ENCODE measurements at regions of chr2 and their contacts with region 1.

Region 1: GRCh38 chr2:240434728-240435456 is 571 bp upstream of the GPC1 start:
- DNase-seq: peak; percentile 70 to 91 (median 81)
- ATAC-seq: peak; percentile 89
- H3K4me3 ChIP-seq: peak overlapping the region; percentile 48
- H3K4me3 Mint-ChIP-seq: peak overlapping the region; percentile 81 to 89 (median 86)
- H3K27ac ChIP-seq: no peak overlapping the region
- H3K27ac Mint-ChIP-seq: peak overlapping the region in 6 of 9 donors; percentile 14 to 77 (median 57)
- H3K4me1 ChIP-seq: peaks cover 0 to 6% of the 10 kb centered on the region in 2 donors
- H3K4me1 Mint-ChIP-seq: peaks cover 0 to 11% (median 4%) of the 10 kb centered on the region in 7 donors
- H3K27me3 ChIP-seq: peaks cover 0 to 12% of the 10 kb centered on the region in 2 donors
- H3K27me3 Mint-ChIP-seq: peaks cover 12 to 33% (median 21%) of the 10 kb centered on the region in 5 donors

Region 2: GRCh38 chr2:240021488-240022104 is 413.3 kb before region 1 on chr2:
- CTCF ChIA-PET with region 1: no interaction called
- POLR2A ChIA-PET with region 1: no interaction called
- intact Hi-C with region 1: loop called in 1 of 2 experiments (anchors 1 kb)
- DNase-seq: peak; percentile 18 to 68 (median 51)
- ATAC-seq: peak; percentile 43
- H3K4me3 ChIP-seq: no peak overlapping the region
- H3K4me3 Mint-ChIP-seq: no peak overlapping the region
- H3K27ac ChIP-seq: no peak overlapping the region
- H3K27ac Mint-ChIP-seq: peak overlapping the region in 1 of 9 donors; percentile 32
- H3K4me1 ChIP-seq: peaks cover 8 to 15% of the 10 kb centered on the region in 2 donors
- H3K4me1 Mint-ChIP-seq: peaks cover 15 to 39% (median 35%) of the 10 kb centered on the region in 7 donors
- H3K27me3 ChIP-seq: no peaks in the 10 kb centered on the region
- H3K27me3 Mint-ChIP-seq: peaks cover 0 to 2% (median 0%) of the 10 kb centered on the region in 5 donors

Region 3: DNA sequence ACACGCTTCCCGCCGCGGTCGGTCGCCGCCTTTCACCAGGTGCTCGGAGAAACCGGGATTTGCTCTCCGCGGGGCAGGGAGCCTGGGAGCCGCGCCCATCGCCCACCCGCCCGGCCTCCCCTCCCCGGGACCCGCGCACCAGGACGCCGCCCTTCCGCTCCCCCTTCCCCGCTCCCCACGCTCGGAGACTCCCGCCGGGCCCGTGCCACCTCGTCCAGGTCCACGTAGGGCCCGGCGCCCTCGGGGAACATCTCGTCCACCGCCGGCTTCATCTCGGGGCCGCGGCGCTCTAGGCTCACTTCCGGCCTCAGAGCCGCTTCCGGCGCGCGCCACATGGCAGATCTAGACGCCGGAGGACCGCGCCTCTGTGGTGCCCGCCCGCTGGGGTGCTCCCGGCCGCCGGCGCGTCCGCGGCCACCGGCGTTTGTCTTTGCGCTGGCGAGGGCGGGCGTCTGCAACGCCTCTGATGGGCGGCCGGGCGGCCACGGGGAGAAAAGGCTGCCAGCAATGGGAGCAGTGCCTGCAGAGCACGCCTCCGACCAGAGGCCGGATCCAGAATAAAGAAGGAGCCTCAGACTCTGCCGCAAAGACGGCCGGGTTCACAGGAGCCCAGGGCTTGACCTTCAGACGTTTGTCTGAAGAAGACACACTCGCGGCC is 298.8 kb before region 1 on chr2 and contains the start of gene COPS9:
- CTCF ChIA-PET with region 1: no interaction called
- POLR2A ChIA-PET with region 1: no interaction called
- intact Hi-C with region 1: loop called (anchors 1 to 2 kb)
- DNase-seq: peak; percentile 74 to 89 (median 82)
- ATAC-seq: peak; percentile 98
- H3K4me3 ChIP-seq: peak within 1 kb of the TSS; percentile 95
- H3K4me3 Mint-ChIP-seq: peak within 1 kb of the TSS; percentile 79 to 97 (median 93)
- H3K27ac ChIP-seq: peak within 1 kb of the TSS; percentile 75
- H3K27ac Mint-ChIP-seq: peak within 1 kb of the TSS; percentile 78 to 95 (median 90)
- H3K4me1 ChIP-seq: peaks cover 17 to 18% of the 10 kb centered on the region in 2 donors
- H3K4me1 Mint-ChIP-seq: peaks cover 21 to 32% (median 28%) of the 10 kb centered on the region in 7 donors
- H3K27me3 ChIP-seq: no peaks in the 10 kb centered on the region
- H3K27me3 Mint-ChIP-seq: peaks cover 0 to 4% (median 0%) of the 10 kb centered on the region in 5 donors
- total RNA-seq, gene COPS9: 53.7 to 106 (median 71.8) TPM

Region 4: DNA sequence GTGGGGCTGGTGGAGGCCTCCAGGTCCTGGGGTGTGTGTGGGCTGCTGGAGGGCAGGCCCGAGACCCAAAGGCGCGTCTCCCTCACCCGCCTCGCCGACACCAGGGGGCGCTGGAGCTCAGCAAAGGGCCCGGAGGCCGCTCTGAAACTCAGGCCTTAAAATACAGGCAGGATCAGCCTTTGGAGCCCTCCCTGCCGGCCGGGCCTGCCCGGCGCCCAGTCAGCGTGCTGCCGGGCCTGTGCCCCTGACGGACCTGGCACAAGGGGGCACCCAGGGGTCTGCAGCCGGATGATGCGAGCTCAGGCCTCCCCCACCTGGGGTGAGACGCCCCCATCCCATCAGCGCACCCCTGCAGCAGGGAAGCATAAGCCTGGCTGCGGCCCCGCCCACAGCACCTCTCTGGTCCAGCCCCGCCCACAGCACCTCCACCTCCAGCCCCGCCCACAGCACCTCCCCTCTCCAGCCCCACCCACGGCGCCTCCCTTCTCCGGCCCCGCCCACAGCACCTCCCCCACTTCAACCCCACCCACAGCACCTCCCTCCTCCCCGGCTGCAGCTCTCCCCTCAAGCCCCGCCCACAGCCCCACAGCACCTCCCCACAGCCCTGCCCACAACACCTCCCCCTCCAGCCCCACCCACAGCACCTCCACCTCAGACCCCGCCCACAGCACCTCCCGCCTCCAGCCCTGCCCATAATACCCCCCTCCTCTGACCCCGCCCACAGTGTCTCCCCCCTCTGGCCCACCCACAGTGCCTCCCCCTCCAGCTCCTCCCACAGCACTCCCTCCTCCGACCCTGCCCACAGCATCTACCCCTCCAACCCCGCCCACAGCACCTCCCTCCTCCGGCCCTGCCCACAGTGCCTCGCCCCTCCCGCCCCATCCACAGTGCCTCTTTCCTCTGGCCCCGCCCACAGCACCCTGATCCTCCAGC is 201.7 kb before region 1 on chr2:
- CTCF ChIA-PET with region 1: no interaction called
- POLR2A ChIA-PET with region 1: no interaction called
- intact Hi-C with region 1: loop called in 1 of 2 experiments (anchors 1 kb)
- DNase-seq: peak; percentile 48 to 75 (median 69)
- ATAC-seq: peak; percentile 84
- H3K4me3 ChIP-seq: no peak overlapping the region
- H3K4me3 Mint-ChIP-seq: peak overlapping the region in 6 of 10 donors; percentile 21 to 74 (median 56)
- H3K27ac ChIP-seq: peak overlapping the region; percentile 13
- H3K27ac Mint-ChIP-seq: no peak overlapping the region
- H3K4me1 ChIP-seq: no peaks in the 10 kb centered on the region
- H3K4me1 Mint-ChIP-seq: peaks cover 0 to 14% (median 0%) of the 10 kb centered on the region in 7 donors
- H3K27me3 ChIP-seq: no peaks in the 10 kb centered on the region
- H3K27me3 Mint-ChIP-seq: peaks cover 0 to 20% (median 11%) of the 10 kb centered on the region in 5 donors

Region 5: GRCh38 chr2:241734467-241735208 is 1299.7 kb after region 1 on chr2 and contains the start of gene D2HGDH:
- CTCF ChIA-PET with region 1: no interaction called
- POLR2A ChIA-PET with region 1: no interaction called
- intact Hi-C with region 1: loop called in 1 of 2 experiments (anchors 5 kb)
- DNase-seq: peak; percentile 85 to 99 (median 91)
- ATAC-seq: peak; percentile 98
- H3K4me3 ChIP-seq: peak within 1 kb of the TSS; percentile 88
- H3K4me3 Mint-ChIP-seq: peak within 1 kb of the TSS; percentile 79 to 89 (median 84)
- H3K27ac ChIP-seq: peak within 1 kb of the TSS; percentile 75
- H3K27ac Mint-ChIP-seq: peak within 1 kb of the TSS in 8 of 9 donors; percentile 40 to 79 (median 72)
- H3K4me1 ChIP-seq: peaks cover 9% of the 10 kb centered on the region in 2 donors
- H3K4me1 Mint-ChIP-seq: peaks cover 9 to 54% (median 43%) of the 10 kb centered on the region in 7 donors
- H3K27me3 ChIP-seq: no peaks in the 10 kb centered on the region
- H3K27me3 Mint-ChIP-seq: no peaks in the 10 kb centered on the region
- total RNA-seq, gene D2HGDH: 32.5 to 49.8 (median 41.1) TPM